Naive thymus-derived CD4-positive, alpha-beta T cell (primary cell): ENCODE measurements at regions of chr14 and their contacts with region 1.

Region 1: DNA sequence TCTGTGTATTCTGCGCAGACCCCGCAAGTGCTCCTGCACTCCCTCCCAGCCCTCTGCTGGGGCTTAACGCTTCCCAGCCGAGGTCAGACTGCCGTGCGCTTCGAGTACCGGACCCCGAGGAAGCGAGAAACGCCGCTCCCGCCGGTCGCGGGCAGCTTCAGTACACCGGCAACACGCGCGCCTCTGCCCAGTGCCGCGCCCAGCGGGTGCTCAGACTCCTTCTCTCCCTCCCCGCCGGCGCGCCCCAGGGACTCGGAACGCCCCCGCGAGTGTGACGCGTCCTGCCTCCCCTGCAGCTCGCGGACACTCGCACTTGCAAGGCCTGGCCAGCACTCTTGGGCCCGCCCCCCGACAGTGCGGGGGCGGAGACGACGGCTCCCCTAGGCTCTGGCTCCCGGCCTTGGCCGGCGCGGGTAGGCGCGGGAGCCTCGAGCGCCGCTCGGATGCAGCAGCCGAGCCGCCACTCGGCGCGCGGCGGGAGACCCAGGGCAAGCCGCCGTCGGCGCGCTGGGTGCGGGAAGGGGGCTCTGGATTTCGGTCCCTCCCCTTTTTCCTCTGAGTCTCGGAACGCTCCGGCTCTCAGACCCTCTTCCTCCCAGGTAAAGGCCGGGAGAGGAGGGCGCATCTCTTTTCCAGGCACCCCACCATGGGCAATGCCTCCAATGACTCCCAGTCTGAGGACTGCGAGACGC is at the start of gene PTGER2:
- DNase-seq: peak; percentile 12 to 91 (median 34)
- ATAC-seq: peak; percentile 79
- H3K4me3 ChIP-seq: peak within 1 kb of the TSS; percentile 80
- H3K4me3 Mint-ChIP-seq: peak within 1 kb of the TSS; percentile 88 to 100 (median 98)
- H3K27ac ChIP-seq: peak within 1 kb of the TSS; percentile 62
- H3K27ac Mint-ChIP-seq: peak within 1 kb of the TSS; percentile 51 to 98 (median 92)
- H3K4me1 ChIP-seq: peaks cover 14 to 26% of the 10 kb centered on the region in 2 donors
- H3K4me1 Mint-ChIP-seq: peaks cover 48 to 81% (median 57%) of the 10 kb centered on the region in 7 donors
- H3K27me3 ChIP-seq: no peaks in the 10 kb centered on the region
- H3K27me3 Mint-ChIP-seq: peaks cover 0 to 5% (median 0%) of the 10 kb centered on the region in 5 donors
- total RNA-seq, gene PTGER2: 1.7 to 162 (median 15.2) TPM

Region 2: DNA sequence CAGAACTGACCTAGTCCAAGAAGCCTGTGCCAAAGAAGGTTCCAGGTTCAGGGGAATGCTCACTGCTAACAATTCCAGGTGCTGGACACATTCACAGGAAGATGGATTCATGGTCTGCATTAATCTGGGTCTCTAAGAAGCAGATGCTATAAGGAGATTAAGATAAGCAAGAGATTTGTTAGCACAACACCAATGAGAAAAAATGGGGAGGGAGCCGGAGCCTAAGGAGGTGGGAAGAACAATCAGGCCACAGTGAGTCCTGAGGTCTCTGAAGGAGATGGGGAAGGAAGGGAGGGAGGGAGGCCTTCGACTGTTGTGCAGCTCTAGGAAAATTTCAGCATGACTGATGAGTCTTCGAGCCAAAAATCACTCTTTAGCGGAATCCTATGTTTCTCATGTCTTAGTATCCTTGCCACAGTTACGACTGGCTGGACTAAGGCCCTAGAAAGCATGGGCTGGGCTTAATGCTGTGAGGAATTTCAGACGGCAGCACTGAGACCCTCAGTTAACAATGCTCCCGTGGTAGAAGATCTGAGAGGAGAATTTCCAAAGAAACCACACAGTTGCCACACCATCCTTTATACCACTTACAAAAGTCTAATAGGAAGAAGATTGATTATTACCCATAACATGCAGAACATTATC is 78.1 kb before region 1 on chr14:
- CTCF ChIA-PET with region 1: no interaction called
- POLR2A ChIA-PET with region 1: no interaction called
- intact Hi-C with region 1: no loop called
- DNase-seq: no peak
- ATAC-seq: no peak
- H3K4me3 ChIP-seq: no peak overlapping the region
- H3K4me3 Mint-ChIP-seq: no peak overlapping the region
- H3K27ac ChIP-seq: no peak overlapping the region
- H3K27ac Mint-ChIP-seq: no peak overlapping the region
- H3K4me1 ChIP-seq: peaks cover 0 to 14% of the 10 kb centered on the region in 2 donors
- H3K4me1 Mint-ChIP-seq: peaks cover 0 to 20% (median 7%) of the 10 kb centered on the region in 7 donors
- H3K27me3 ChIP-seq: no peaks in the 10 kb centered on the region
- H3K27me3 Mint-ChIP-seq: peaks cover 0 to 18% (median 0%) of the 10 kb centered on the region in 5 donors

Region 3: DNA sequence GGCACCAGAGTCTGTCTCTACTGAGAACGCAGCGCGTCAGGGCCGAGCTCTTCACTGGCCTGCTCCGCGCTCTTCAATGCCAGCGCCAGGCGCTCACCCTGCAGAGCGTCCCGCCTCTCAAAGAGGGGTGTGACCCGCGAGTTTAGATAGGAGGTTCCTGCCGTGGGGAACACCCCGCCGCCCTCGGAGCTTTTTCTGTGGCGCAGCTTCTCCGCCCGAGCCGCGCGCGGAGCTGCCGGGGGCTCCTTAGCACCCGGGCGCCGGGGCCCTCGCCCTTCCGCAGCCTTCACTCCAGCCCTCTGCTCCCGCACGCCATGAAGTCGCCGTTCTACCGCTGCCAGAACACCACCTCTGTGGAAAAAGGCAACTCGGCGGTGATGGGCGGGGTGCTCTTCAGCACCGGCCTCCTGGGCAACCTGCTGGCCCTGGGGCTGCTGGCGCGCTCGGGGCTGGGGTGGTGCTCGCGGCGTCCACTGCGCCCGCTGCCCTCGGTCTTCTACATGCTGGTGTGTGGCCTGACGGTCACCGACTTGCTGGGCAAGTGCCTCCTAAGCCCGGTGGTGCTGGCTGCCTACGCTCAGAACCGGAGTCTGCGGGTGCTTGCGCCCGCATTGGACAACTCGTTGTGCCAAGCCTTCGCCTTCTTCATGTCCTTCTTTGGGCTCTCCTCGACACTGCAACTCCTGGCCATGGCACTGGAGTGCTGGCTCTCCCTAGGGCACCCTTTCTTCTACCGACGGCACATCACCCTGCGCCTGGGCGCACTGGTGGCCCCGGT is 46.4 kb before region 1 on chr14 and contains the start of gene PTGDR:
- CTCF ChIA-PET with region 1: no interaction called
- POLR2A ChIA-PET with region 1: no interaction called
- intact Hi-C with region 1: no loop called
- DNase-seq: peak in 2 of 9 donors; percentile 13 to 43
- ATAC-seq: peak; percentile 73
- H3K4me3 ChIP-seq: peak within 1 kb of the TSS; percentile 53
- H3K4me3 Mint-ChIP-seq: peak within 1 kb of the TSS; percentile 54 to 94 (median 82)
- H3K27ac ChIP-seq: no peak within 1 kb of the TSS
- H3K27ac Mint-ChIP-seq: peak within 1 kb of the TSS in 4 of 9 donors; percentile 45 to 73 (median 64)
- H3K4me1 ChIP-seq: peaks cover 5 to 37% of the 10 kb centered on the region in 2 donors
- H3K4me1 Mint-ChIP-seq: peaks cover 12 to 51% (median 42%) of the 10 kb centered on the region in 7 donors
- H3K27me3 ChIP-seq: no peaks in the 10 kb centered on the region
- H3K27me3 Mint-ChIP-seq: peaks cover 36 to 75% (median 45%) of the 10 kb centered on the region in 5 donors
- total RNA-seq, gene PTGDR: 0.22 to 12.4 (median 0.80) TPM

Region 4: GRCh38 chr14:52286661-52287649 is 27.1 kb before region 1 on chr14:
- CTCF ChIA-PET with region 1: no interaction called
- POLR2A ChIA-PET with region 1: no interaction called
- intact Hi-C with region 1: loop called in 1 of 2 experiments (anchors 2 kb)
- DNase-seq: peak in 5 of 9 donors; percentile 9 to 37 (median 24)
- ATAC-seq: peak; percentile 44
- H3K4me3 ChIP-seq: peak overlapping the region; percentile 4
- H3K4me3 Mint-ChIP-seq: peak overlapping the region; percentile 4 to 73 (median 60)
- H3K27ac ChIP-seq: no peak overlapping the region
- H3K27ac Mint-ChIP-seq: peak overlapping the region in 7 of 9 donors; percentile 3 to 91 (median 16)
- H3K4me1 ChIP-seq: peaks cover 21 to 22% of the 10 kb centered on the region in 2 donors
- H3K4me1 Mint-ChIP-seq: peaks cover 19 to 52% (median 27%) of the 10 kb centered on the region in 7 donors
- H3K27me3 ChIP-seq: no peaks in the 10 kb centered on the region
- H3K27me3 Mint-ChIP-seq: peaks cover 0 to 15% (median 0%) of the 10 kb centered on the region in 5 donors

Region 5: GRCh38 chr14:52325126-52325525 is 11.1 kb after region 1 on chr14:
- CTCF ChIA-PET with region 1: no interaction called
- POLR2A ChIA-PET with region 1: interaction called, 5 read pairs
- intact Hi-C with region 1: loop called (anchors 1 kb)
- DNase-seq: no peak
- ATAC-seq: peak; percentile 84
- H3K4me3 ChIP-seq: no peak overlapping the region
- H3K4me3 Mint-ChIP-seq: peak overlapping the region in 2 of 10 donors; percentile 37 to 86
- H3K27ac ChIP-seq: no peak overlapping the region
- H3K27ac Mint-ChIP-seq: peak overlapping the region in 5 of 9 donors; percentile 16 to 86 (median 31)
- H3K4me1 ChIP-seq: peaks cover 0 to 63% of the 10 kb centered on the region in 2 donors
- H3K4me1 Mint-ChIP-seq: peaks cover 9 to 88% (median 20%) of the 10 kb centered on the region in 7 donors
- H3K27me3 ChIP-seq: no peaks in the 10 kb centered on the region
- H3K27me3 Mint-ChIP-seq: peaks cover 0 to 2% (median 0%) of the 10 kb centered on the region in 5 donors

Region 6: DNA sequence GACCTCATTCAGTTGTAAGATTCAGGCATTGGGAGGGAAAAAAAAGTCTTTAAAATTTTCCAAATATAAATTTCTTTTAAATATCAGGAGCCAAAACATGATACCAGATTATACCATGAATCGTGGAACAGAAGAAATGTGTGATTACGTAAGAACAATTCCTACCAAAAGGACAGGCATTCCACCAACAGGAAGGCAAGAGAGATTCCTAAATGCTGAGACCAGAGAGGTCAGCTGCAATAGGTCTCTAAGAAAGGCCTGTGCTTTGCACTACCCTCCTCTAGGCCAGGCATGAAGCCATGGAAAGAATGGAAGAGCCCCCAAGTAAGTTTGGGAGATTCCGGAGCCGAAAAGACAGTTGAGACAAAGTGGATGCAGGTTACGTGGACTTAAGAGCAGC is 83.8 kb after region 1 on chr14:
- CTCF ChIA-PET with region 1: no interaction called
- POLR2A ChIA-PET with region 1: no interaction called
- intact Hi-C with region 1: loop called (anchors 1 to 2 kb)
- DNase-seq: no peak
- ATAC-seq: no peak
- H3K4me3 ChIP-seq: no peak overlapping the region
- H3K4me3 Mint-ChIP-seq: no peak overlapping the region
- H3K27ac ChIP-seq: no peak overlapping the region
- H3K27ac Mint-ChIP-seq: peak overlapping the region in 1 of 9 donors; percentile 26
- H3K4me1 ChIP-seq: peaks cover 32 to 34% of the 10 kb centered on the region in 2 donors
- H3K4me1 Mint-ChIP-seq: peaks cover 32 to 70% (median 35%) of the 10 kb centered on the region in 7 donors
- H3K27me3 ChIP-seq: no peaks in the 10 kb centered on the region
- H3K27me3 Mint-ChIP-seq: peaks cover 0 to 4% (median 0%) of the 10 kb centered on the region in 5 donors

Region 7: GRCh38 chr14:52402812-52403526 is 88.9 kb after region 1 on chr14:
- CTCF ChIA-PET with region 1: no interaction called
- POLR2A ChIA-PET with region 1: no interaction called
- intact Hi-C with region 1: loop called (anchors 1 to 2 kb)
- DNase-seq: peak in 6 of 9 donors; percentile 16 to 56 (median 36)
- ATAC-seq: peak; percentile 75
- H3K4me3 ChIP-seq: no peak overlapping the region
- H3K4me3 Mint-ChIP-seq: peak overlapping the region in 5 of 10 donors; percentile 1 to 25 (median 9)
- H3K27ac ChIP-seq: no peak overlapping the region
- H3K27ac Mint-ChIP-seq: peak overlapping the region in 5 of 9 donors; percentile 3 to 85 (median 15)
- H3K4me1 ChIP-seq: peaks cover 45 to 48% of the 10 kb centered on the region in 2 donors
- H3K4me1 Mint-ChIP-seq: peaks cover 31 to 72% (median 61%) of the 10 kb centered on the region in 7 donors
- H3K27me3 ChIP-seq: no peaks in the 10 kb centered on the region
- H3K27me3 Mint-ChIP-seq: peaks cover 0 to 6% (median 0%) of the 10 kb centered on the region in 5 donors

Region 8: DNA sequence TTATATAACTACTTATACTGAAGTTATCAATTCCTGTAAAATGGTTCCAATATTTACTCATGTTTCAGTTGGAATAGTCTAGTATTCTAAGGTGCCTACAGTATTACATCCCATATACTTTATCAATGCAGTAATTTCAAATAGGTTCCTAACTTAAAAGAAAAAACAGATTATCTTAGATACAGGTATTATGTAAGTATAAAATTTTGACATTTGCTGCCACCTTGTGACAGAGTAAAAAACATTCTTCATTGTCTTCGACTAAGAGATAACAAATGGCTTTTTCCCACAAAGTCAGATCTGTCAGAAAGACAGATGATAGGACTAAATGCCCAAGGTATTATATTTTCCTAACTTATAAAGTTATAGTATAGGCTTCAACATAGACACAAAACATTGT is 159.5 kb after region 1 on chr14:
- CTCF ChIA-PET with region 1: interaction called, 3 read pairs
- POLR2A ChIA-PET with region 1: no interaction called
- intact Hi-C with region 1: loop called in 1 of 2 experiments (anchors 5 kb)
- DNase-seq: peak in 7 of 9 donors; percentile 16 to 60 (median 42)
- ATAC-seq: peak; percentile 42
- H3K4me3 ChIP-seq: no peak overlapping the region
- H3K4me3 Mint-ChIP-seq: no peak overlapping the region
- H3K27ac ChIP-seq: no peak overlapping the region
- H3K27ac Mint-ChIP-seq: no peak overlapping the region
- H3K4me1 ChIP-seq: no peaks in the 10 kb centered on the region
- H3K4me1 Mint-ChIP-seq: peaks cover 4 to 40% (median 24%) of the 10 kb centered on the region in 7 donors
- H3K27me3 ChIP-seq: no peaks in the 10 kb centered on the region
- H3K27me3 Mint-ChIP-seq: no peaks in the 10 kb centered on the region

Region 9: DNA sequence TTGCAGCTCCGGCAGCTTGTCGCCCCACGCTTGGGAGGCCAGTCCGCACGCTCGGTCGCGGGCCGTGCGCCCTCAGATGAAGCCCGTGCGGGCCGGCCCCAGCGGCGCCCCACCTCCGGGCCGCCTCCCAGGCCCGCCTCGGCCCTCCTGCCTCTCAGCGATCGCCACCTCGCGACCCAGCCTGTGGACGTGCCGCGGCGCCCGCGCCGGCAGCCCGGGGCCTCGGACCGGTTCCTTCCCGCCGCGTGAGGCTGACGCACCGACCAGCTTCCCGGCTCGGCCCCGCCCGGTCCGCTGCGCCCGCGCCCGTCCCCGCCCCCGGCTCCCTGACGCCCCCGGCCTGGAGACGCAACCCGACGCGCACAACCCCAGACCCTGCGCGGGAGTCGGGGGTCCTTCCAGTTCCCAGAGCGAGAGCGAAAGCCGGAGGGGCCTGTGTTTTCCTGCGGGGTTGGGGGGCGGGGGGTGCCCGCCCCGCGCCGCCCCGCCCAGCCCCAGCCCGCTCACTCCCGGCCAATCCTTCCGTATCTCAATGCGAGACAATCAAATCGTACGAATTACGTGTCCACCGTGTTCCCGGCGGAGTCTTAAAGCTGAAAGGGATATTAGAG is 381.5 kb after region 1 on chr14 and contains the start of gene ERO1A:
- CTCF ChIA-PET with region 1: no interaction called
- POLR2A ChIA-PET with region 1: no interaction called
- intact Hi-C with region 1: loop called in 1 of 2 experiments (anchors 2 kb)
- DNase-seq: peak; percentile 26 to 83 (median 53)
- ATAC-seq: peak; percentile 82
- H3K4me3 ChIP-seq: peak within 1 kb of the TSS; percentile 79
- H3K4me3 Mint-ChIP-seq: peak within 1 kb of the TSS; percentile 95 to 99 (median 99)
- H3K27ac ChIP-seq: peak within 1 kb of the TSS; percentile 85
- H3K27ac Mint-ChIP-seq: peak within 1 kb of the TSS; percentile 94 to 99 (median 98)
- H3K4me1 ChIP-seq: peaks cover 26 to 27% of the 10 kb centered on the region in 2 donors
- H3K4me1 Mint-ChIP-seq: peaks cover 32 to 47% (median 42%) of the 10 kb centered on the region in 7 donors
- H3K27me3 ChIP-seq: no peaks in the 10 kb centered on the region
- H3K27me3 Mint-ChIP-seq: no peaks in the 10 kb centered on the region
- total RNA-seq, gene ERO1A: 65.3 to 201 (median 68.7) TPM